Endothelial cell of umbilical vein (primary cell): ENCODE measurements at regions of chr1 and their contacts with region 1.

Region 1: GRCh38 chr1:150464422-150464826 is 22.8 kb upstream of the TARS2 start:
- DNase-seq: peak; percentile 71
- H3K4me3 ChIP-seq: no peak overlapping the region
- H3K27ac ChIP-seq: no peak overlapping the region
- H3K4me1 ChIP-seq: peaks cover 2% of the 10 kb centered on the region
- H3K27me3 ChIP-seq: no peaks in the 10 kb centered on the region
- CTCF ChIP-seq: peak; percentile 69 to 71
- POLR2A ChIP-seq: no peak

Region 2: GRCh38 chr1:150515328-150516048 is 51.1 kb after region 1 on chr1 and contains the start of gene FALEC:
- CTCF ChIA-PET with region 1: interaction called, 6 read pairs
- POLR2A ChIA-PET with region 1: no interaction called
- dilution Hi-C with region 1: no loop called
- intact Hi-C with region 1: loop called (anchors 5 kb)
- DNase-seq: peak; percentile 97
- H3K4me3 ChIP-seq: peak within 1 kb of the TSS; percentile 39 to 77 (median 48)
- H3K27ac ChIP-seq: peak within 1 kb of the TSS; percentile 9
- H3K4me1 ChIP-seq: peaks cover 6% of the 10 kb centered on the region
- H3K27me3 ChIP-seq: no peaks in the 10 kb centered on the region
- CTCF ChIP-seq: no peak
- POLR2A ChIP-seq: peak; percentile 44
- total RNA-seq, gene FALEC: not detected in 2 replicates

Region 3: GRCh38 chr1:150532868-150533302 is 68.5 kb after region 1 on chr1:
- CTCF ChIA-PET with region 1: interaction called, 19 read pairs
- POLR2A ChIA-PET with region 1: no interaction called
- dilution Hi-C with region 1: no loop called
- intact Hi-C with region 1: loop called (anchors 1 kb)
- DNase-seq: no peak
- H3K4me3 ChIP-seq: no peak overlapping the region
- H3K27ac ChIP-seq: no peak overlapping the region
- H3K4me1 ChIP-seq: no peaks in the 10 kb centered on the region
- H3K27me3 ChIP-seq: no peaks in the 10 kb centered on the region
- CTCF ChIP-seq: no peak
- POLR2A ChIP-seq: no peak

Region 4: GRCh38 chr1:150548632-150549495 is 84.4 kb after region 1 on chr1 and contains the start of gene ADAMTSL4:
- CTCF ChIA-PET with region 1: interaction called, 3 read pairs
- POLR2A ChIA-PET with region 1: no interaction called
- dilution Hi-C with region 1: no loop called
- intact Hi-C with region 1: loop called (anchors 5 kb)
- DNase-seq: peak; percentile 68
- H3K4me3 ChIP-seq: peak within 1 kb of the TSS; percentile 25 to 36 (median 34)
- H3K27ac ChIP-seq: no peak within 1 kb of the TSS
- H3K4me1 ChIP-seq: peaks cover 22% of the 10 kb centered on the region
- H3K27me3 ChIP-seq: peaks cover 2 to 3% of the 10 kb centered on the region in 2 experiments
- CTCF ChIP-seq: peak in 1 of 2 donors; percentile 28
- POLR2A ChIP-seq: peak; percentile 3
- total RNA-seq, gene ADAMTSL4: 0.37 and 0.73 TPM in 2 replicates

Region 5: GRCh38 chr1:150596095-150596892 is 131.9 kb after region 1 on chr1:
- CTCF ChIA-PET with region 1: no interaction called
- POLR2A ChIA-PET with region 1: no interaction called
- dilution Hi-C with region 1: no loop called
- intact Hi-C with region 1: no loop called
- DNase-seq: no peak
- H3K4me3 ChIP-seq: no peak overlapping the region
- H3K27ac ChIP-seq: no peak overlapping the region
- H3K4me1 ChIP-seq: no peaks in the 10 kb centered on the region
- H3K27me3 ChIP-seq: no peaks in the 10 kb centered on the region
- CTCF ChIP-seq: no peak
- POLR2A ChIP-seq: no peak

Region 6: DNA sequence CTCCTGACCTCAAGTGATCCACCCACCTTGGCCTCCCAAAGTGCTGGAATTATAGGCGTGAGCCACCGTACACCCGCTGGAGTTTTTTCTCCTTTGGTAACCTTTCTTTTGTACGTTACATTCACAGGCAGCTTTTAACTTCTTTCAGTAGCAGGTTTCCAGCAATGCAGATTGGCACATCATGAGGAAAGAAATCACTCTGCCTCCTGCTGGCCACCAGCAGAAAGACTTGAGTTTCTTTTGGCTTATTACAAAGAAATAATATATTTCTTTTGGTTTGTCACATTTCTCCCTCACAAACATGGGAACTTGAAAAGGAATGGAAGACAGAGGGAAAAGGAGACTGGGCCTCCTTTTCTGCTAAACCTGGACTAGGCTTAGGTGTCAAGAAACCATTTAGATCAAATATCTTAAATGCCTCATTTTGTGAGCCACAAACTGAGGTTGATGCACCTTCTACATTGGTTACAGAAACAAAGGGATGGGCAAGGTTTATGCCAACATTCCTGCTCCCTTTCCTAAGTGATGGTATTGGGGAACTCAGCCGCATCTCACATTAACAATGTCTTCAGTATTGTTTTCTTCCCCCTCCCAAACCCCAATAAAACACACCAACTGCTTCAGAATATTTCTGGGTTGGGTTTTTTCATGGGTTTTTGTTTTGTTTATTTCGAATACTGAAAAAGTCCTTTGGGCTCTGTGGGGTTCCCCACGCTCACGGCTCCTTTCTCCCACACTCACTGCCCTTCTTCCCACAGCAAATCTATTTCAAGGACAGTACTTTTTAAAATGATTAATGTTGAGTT is 157.3 kb after region 1 on chr1:
- CTCF ChIA-PET with region 1: no interaction called
- POLR2A ChIA-PET with region 1: no interaction called
- dilution Hi-C with region 1: no loop called
- intact Hi-C with region 1: loop called (anchors 5 kb)
- DNase-seq: peak; percentile 73
- H3K4me3 ChIP-seq: no peak overlapping the region
- H3K27ac ChIP-seq: peak overlapping the region; percentile 27
- H3K4me1 ChIP-seq: peaks cover 30% of the 10 kb centered on the region
- H3K27me3 ChIP-seq: no peaks in the 10 kb centered on the region
- CTCF ChIP-seq: peak; percentile 65 to 66
- POLR2A ChIP-seq: no peak

Region 7: DNA sequence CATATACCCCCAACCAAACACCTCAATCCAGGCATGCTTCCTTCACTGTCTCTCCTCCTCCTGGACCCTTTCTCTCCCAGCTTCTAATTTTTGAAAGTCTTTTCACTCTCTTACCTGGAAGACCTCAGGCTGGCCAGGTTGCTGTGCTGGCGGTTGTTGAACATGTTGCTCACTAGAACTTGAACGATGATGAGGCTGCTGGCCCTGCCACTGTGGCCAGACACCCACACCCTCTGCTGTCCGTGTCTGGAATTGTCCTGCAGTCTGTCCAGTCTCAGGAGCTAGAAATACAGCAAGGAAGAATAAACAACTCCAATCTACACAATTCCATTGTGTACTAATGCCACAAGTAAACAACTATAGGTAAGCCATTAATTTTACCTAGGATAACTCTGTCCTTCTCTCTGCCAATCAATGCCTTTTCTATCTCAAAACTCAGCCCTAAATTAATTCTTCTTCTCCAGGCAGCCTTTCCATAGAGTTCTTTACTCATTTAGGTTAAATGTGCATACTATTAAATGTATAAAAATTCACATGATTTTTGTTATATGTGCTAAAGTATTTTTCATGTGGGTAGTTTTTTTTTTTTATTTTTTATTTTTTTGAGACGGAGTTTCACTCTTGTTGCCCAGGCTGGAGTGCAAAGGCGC is 348.8 kb after region 1 on chr1:
- CTCF ChIA-PET with region 1: interaction called, 5 read pairs
- POLR2A ChIA-PET with region 1: no interaction called
- dilution Hi-C with region 1: no loop called
- intact Hi-C with region 1: loop called (anchors 2 kb)
- DNase-seq: peak; percentile 83
- H3K4me3 ChIP-seq: no peak overlapping the region
- H3K27ac ChIP-seq: no peak overlapping the region
- H3K4me1 ChIP-seq: peaks cover 2% of the 10 kb centered on the region
- H3K27me3 ChIP-seq: no peaks in the 10 kb centered on the region
- CTCF ChIP-seq: peak; percentile 76 to 81
- POLR2A ChIP-seq: no peak